H1 (cell line): ENCODE measurements at regions of chr10 and their contacts with region 1.

Region 1: GRCh38 chr10:123897146-123897545 is 5.5 kb upstream of the CPXM2 start:
- DNase-seq: no peak
- H3K4me3 ChIP-seq: no peak overlapping the region
- H3K27ac ChIP-seq: no peak overlapping the region
- H3K4me1 ChIP-seq: peaks cover 0 to 2% (median under 1%) of the 10 kb centered on the region in 4 experiments; a peak in 1 of 7 replicates
- H3K27me3 ChIP-seq: peaks cover 0 to 12% (median 7%) of the 10 kb centered on the region in 4 experiments; a peak in 5 of 7 replicates
- CTCF ChIP-seq: peak in 2 of 3 experiments; percentile 57 to 85; a peak in 3 of 4 replicates
- EP300 ChIP-seq: no peak
- POLR2A ChIP-seq: no peak
- RAD21 ChIP-seq: peak; percentile 69 to 76

Region 2: GRCh38 chr10:123878666-123879303 is 18.4 kb before region 1 on chr10:
- CTCF ChIA-PET with region 1: interaction called, 10 read pairs
- POLR2A ChIA-PET with region 1: no interaction called
- DNase-seq: no peak
- H3K4me3 ChIP-seq: no peak overlapping the region
- H3K27ac ChIP-seq: no peak overlapping the region
- H3K4me1 ChIP-seq: no peaks in the 10 kb centered on the region
- H3K27me3 ChIP-seq: no peaks in the 10 kb centered on the region
- CTCF ChIP-seq: no peak
- EP300 ChIP-seq: no peak
- POLR2A ChIP-seq: no peak
- RAD21 ChIP-seq: no peak

Region 3: DNA sequence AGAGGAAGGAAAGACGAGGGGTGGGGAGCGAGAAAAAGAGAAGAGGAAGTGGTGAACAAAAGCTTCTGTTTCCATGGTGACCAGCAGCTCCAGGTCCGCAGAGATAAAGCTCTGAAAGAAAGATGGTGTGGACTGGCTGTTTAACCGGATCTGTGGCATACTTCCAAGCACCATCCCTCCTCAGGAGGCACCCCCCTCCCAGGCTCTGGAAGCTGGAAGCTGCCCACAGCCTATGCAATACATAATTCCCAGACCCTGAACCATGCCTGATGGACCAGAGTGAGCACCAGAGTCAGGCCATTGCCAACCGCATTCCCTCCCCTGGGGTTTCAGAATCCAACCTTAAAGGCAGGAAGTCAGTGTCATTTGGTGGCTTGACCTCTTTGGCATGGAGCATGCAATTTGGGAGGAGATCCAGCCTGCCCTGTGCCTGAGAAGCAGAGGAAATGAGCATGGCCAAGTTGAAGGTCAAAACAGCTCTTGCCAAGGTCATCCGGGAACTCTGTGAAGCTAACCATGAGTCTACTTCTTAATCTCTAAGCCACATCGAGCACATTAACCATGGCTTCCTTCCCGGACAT is 16.6 kb after region 1 on chr10:
- CTCF ChIA-PET with region 1: interaction called, 24 read pairs
- POLR2A ChIA-PET with region 1: interaction called, 4 read pairs
- DNase-seq: no peak
- H3K4me3 ChIP-seq: no peak overlapping the region
- H3K27ac ChIP-seq: no peak overlapping the region
- H3K4me1 ChIP-seq: peaks cover 0 to 11% (median 5%) of the 10 kb centered on the region in 4 experiments; a peak in 6 of 7 replicates
- H3K27me3 ChIP-seq: no peaks in the 10 kb centered on the region; a peak in 1 of 7 replicates
- CTCF ChIP-seq: no peak
- EP300 ChIP-seq: no peak
- POLR2A ChIP-seq: no peak
- RAD21 ChIP-seq: no peak

Region 4: GRCh38 chr10:123967396-123968243 is 70.5 kb after region 1 on chr10:
- CTCF ChIA-PET with region 1: interaction called, 11 read pairs
- POLR2A ChIA-PET with region 1: no interaction called
- DNase-seq: peak; percentile 63 to 95
- H3K4me3 ChIP-seq: no peak overlapping the region
- H3K27ac ChIP-seq: no peak overlapping the region
- H3K4me1 ChIP-seq: peaks cover 2 to 20% (median 8%) of the 10 kb centered on the region in 4 experiments
- H3K27me3 ChIP-seq: peaks cover 0 to 8% (median 5%) of the 10 kb centered on the region in 4 experiments; a peak in 3 of 7 replicates
- CTCF ChIP-seq: peak; percentile 89 to 95 (median 91)
- EP300 ChIP-seq: no peak
- POLR2A ChIP-seq: no peak
- RAD21 ChIP-seq: peak; percentile 99